MCF 10A (cell line): ENCODE measurements at regions of chr10 and their contacts with region 1.

Region 1: DNA sequence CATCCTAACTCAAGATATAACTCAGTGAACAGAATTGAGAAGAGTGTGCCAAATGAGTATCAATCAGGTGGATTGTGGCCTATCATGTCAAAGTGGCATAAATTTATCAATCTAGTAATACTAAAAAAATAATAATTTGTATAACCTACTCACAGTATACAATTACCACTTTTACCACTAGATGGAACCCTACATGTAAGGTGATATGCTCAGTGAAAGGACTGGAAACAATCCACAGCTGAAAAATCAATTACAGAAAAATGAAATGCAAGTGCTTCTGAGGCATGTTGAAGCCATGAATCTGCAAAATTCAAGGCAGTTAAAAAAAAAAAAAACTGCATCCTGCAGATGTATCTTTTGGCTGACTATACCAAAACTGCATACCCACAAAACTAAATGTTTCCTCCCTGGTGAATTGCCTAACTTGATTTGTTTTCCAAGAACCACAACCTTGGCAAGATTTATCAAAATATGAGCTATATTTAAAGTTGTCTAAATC is 13.9 kb downstream of the ARHGAP19 start:
- DNase-seq: peak; percentile 84
- H3K4me3 Mint-ChIP-seq: no peak overlapping the region
- H3K27ac Mint-ChIP-seq: peak overlapping the region; percentile 89
- H3K4me1 Mint-ChIP-seq: peaks cover 17% of the 10 kb centered on the region
- H3K27me3 Mint-ChIP-seq: no peaks in the 10 kb centered on the region
- CTCF ChIP-seq: peak; percentile 37

Region 2: GRCh38 chr10:97259119-97259518 is 19.4 kb before region 1 on chr10:
- CTCF ChIA-PET with region 1: interaction called, 13 read pairs
- POLR2A ChIA-PET with region 1: interaction called, 5 read pairs
- intact Hi-C with region 1: no loop called
- DNase-seq: no peak
- H3K4me3 Mint-ChIP-seq: no peak overlapping the region
- H3K27ac Mint-ChIP-seq: no peak overlapping the region
- H3K4me1 Mint-ChIP-seq: no peaks in the 10 kb centered on the region
- H3K27me3 Mint-ChIP-seq: no peaks in the 10 kb centered on the region
- CTCF ChIP-seq: no peak

Region 3: GRCh38 chr10:97292097-97292862 is 13.7 kb after region 1 on chr10 and contains the start of gene ARHGAP19:
- CTCF ChIA-PET with region 1: interaction called, 22 read pairs
- POLR2A ChIA-PET with region 1: interaction called, 44 read pairs
- intact Hi-C with region 1: no loop called
- DNase-seq: peak; percentile 99
- H3K4me3 Mint-ChIP-seq: peak within 1 kb of the TSS; percentile 87
- H3K27ac Mint-ChIP-seq: peak within 1 kb of the TSS; percentile 88
- H3K4me1 Mint-ChIP-seq: peaks cover 4% of the 10 kb centered on the region
- H3K27me3 Mint-ChIP-seq: no peaks in the 10 kb centered on the region
- CTCF ChIP-seq: no peak
- total RNA-seq, gene ARHGAP19: 10.6 and 11.7 TPM in 2 replicates

Region 4: GRCh38 chr10:97318772-97319651 is 40.5 kb after region 1 on chr10 and contains the start of gene FRAT1:
- CTCF ChIA-PET with region 1: interaction called, 10 read pairs
- POLR2A ChIA-PET with region 1: interaction called, 31 read pairs
- intact Hi-C with region 1: loop called (anchors 2 kb)
- DNase-seq: peak; percentile 87
- H3K4me3 Mint-ChIP-seq: peak within 1 kb of the TSS; percentile 80
- H3K27ac Mint-ChIP-seq: peak within 1 kb of the TSS; percentile 99
- H3K4me1 Mint-ChIP-seq: peaks cover 8% of the 10 kb centered on the region
- H3K27me3 Mint-ChIP-seq: no peaks in the 10 kb centered on the region
- CTCF ChIP-seq: no peak
- total RNA-seq, gene FRAT1: 1.9 and 2.1 TPM in 2 replicates

Region 5: DNA sequence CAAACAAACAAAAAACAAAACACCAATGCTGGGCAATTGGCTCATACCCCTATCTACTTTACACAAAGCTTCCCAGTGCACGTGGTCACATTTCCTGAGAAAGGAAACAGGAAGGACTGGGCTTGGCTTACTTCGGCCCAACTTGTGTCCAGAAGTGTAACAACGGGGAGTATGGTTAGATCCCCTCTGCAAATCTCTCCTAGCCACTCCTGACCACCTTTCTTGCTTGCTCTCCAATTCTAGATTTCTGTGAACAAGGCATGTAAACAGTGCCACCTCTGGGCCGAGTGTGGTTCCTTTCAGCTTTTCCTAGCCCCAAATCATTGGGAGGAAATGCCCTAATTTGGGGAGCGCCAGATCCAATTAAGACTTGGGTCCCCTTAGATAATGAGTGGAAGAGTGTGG is 77.0 kb after region 1 on chr10:
- CTCF ChIA-PET with region 1: interaction called, 11 read pairs
- POLR2A ChIA-PET with region 1: interaction called, 3 read pairs
- intact Hi-C with region 1: loop called (anchors 2 kb)
- DNase-seq: peak; percentile 27
- H3K4me3 Mint-ChIP-seq: no peak overlapping the region
- H3K27ac Mint-ChIP-seq: no peak overlapping the region
- H3K4me1 Mint-ChIP-seq: no peaks in the 10 kb centered on the region
- H3K27me3 Mint-ChIP-seq: no peaks in the 10 kb centered on the region
- CTCF ChIP-seq: no peak